MCF 10A (cell line): ENCODE measurements at regions of chr1 and their contacts with region 1.

Region 1: DNA sequence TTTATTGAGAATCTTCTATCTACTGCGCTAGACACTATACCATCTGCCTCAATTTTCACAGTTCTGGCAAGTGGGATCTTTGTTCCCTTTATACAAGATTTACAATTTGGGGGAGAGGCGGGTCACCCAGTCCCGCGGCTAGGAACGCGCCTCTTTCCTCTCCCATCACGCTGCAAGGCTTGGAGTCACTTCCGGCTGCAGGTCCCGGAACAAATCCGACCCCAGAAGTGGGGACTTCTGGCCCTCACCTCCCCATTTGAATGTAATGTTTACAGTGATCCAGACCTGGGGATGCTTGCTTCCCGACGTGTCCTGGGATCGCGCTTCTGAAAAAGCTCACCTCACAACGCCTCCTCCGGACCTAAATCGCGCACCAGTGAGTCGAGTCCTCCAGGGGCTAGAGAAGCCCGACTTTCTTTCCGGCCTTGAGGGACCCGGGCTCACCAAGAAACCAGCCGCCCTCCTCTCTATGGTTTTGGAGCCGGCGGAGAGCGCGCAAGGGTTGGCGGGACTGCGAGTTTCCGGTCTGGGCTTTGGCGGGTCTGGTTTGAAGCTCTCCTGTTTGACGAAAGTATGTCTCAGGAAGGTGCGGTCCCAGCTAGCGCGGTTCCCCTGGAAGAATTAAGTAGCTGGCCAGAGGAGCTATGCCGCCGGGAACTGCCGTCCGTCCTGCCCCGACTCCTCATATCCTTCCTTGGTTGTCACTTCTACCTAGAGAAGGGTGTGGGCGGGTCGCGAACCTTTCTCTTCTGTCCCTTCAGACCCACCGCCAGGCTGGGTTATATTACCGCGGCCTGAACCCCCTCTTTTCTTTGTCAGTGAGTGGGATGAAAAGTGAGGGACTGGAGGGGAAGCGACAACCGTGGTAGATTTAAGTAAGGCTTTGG is at the start of gene METTL18:
- DNase-seq: peak; percentile 98
- H3K4me3 Mint-ChIP-seq: peak within 1 kb of the TSS; percentile 100
- H3K27ac Mint-ChIP-seq: peak within 1 kb of the TSS; percentile 99
- H3K4me1 Mint-ChIP-seq: peaks cover 10% of the 10 kb centered on the region
- H3K27me3 Mint-ChIP-seq: no peaks in the 10 kb centered on the region
- CTCF ChIP-seq: peak; percentile 53
- total RNA-seq, gene METTL18: 2.8 and 4.1 TPM in 2 replicates

Region 2: GRCh38 chr1:169653873-169654272 is 140.9 kb before region 1 on chr1:
- CTCF ChIA-PET with region 1: no interaction called
- POLR2A ChIA-PET with region 1: no interaction called
- intact Hi-C with region 1: no loop called
- DNase-seq: no peak
- H3K4me3 Mint-ChIP-seq: no peak overlapping the region
- H3K27ac Mint-ChIP-seq: no peak overlapping the region
- H3K4me1 Mint-ChIP-seq: no peaks in the 10 kb centered on the region
- H3K27me3 Mint-ChIP-seq: peaks cover 44% of the 10 kb centered on the region
- CTCF ChIP-seq: no peak

Region 3: GRCh38 chr1:169784094-169784493 is 10.7 kb before region 1 on chr1:
- CTCF ChIA-PET with region 1: interaction called, 22 read pairs
- POLR2A ChIA-PET with region 1: interaction called, 8 read pairs
- intact Hi-C with region 1: no loop called
- DNase-seq: peak; percentile 10
- H3K4me3 Mint-ChIP-seq: no peak overlapping the region
- H3K27ac Mint-ChIP-seq: no peak overlapping the region
- H3K4me1 Mint-ChIP-seq: peaks cover 5% of the 10 kb centered on the region
- H3K27me3 Mint-ChIP-seq: peaks cover 40% of the 10 kb centered on the region
- CTCF ChIP-seq: no peak